Activated CD4-positive, alpha-beta T cell treated with anti-CD3 and anti-CD28 coated beads for 36 hours (primary cell): ENCODE measurements at regions of chr20 and their contacts with region 1.

Region 1: GRCh38 chr20:53578492-53579222 is 15.0 kb downstream of the ZNF217 start:
- DNase-seq: peak; percentile 62
- ATAC-seq: peak; percentile 45
- H3K4me3 Mint-ChIP-seq: peak overlapping the region; percentile 70
- H3K27ac Mint-ChIP-seq: peak overlapping the region; percentile 83
- H3K4me1 Mint-ChIP-seq: peaks cover 91% of the 10 kb centered on the region
- H3K27me3 Mint-ChIP-seq: no peaks in the 10 kb centered on the region

Region 2: GRCh38 chr20:53594068-53595017 is 15.7 kb after region 1 on chr20:
- CTCF ChIA-PET with region 1: interaction called, 5 read pairs
- POLR2A ChIA-PET with region 1: interaction called, 3 read pairs
- intact Hi-C with region 1: loop called in 1 of 2 experiments (anchors 1 kb)
- DNase-seq: peak; percentile 99
- ATAC-seq: peak; percentile 62
- H3K4me3 Mint-ChIP-seq: peak overlapping the region; percentile 97
- H3K27ac Mint-ChIP-seq: peak overlapping the region; percentile 95
- H3K4me1 Mint-ChIP-seq: peaks cover 47% of the 10 kb centered on the region
- H3K27me3 Mint-ChIP-seq: no peaks in the 10 kb centered on the region

Region 3: GRCh38 chr20:53643031-53643832 is 64.6 kb after region 1 on chr20:
- CTCF ChIA-PET with region 1: interaction called, 4 read pairs
- POLR2A ChIA-PET with region 1: no interaction called
- intact Hi-C with region 1: loop called (anchors 1 kb)
- DNase-seq: peak; percentile 80
- ATAC-seq: peak; percentile 98
- H3K4me3 Mint-ChIP-seq: peak overlapping the region; percentile 54
- H3K27ac Mint-ChIP-seq: peak overlapping the region; percentile 97
- H3K4me1 Mint-ChIP-seq: peaks cover 33% of the 10 kb centered on the region
- H3K27me3 Mint-ChIP-seq: no peaks in the 10 kb centered on the region

Region 4: DNA sequence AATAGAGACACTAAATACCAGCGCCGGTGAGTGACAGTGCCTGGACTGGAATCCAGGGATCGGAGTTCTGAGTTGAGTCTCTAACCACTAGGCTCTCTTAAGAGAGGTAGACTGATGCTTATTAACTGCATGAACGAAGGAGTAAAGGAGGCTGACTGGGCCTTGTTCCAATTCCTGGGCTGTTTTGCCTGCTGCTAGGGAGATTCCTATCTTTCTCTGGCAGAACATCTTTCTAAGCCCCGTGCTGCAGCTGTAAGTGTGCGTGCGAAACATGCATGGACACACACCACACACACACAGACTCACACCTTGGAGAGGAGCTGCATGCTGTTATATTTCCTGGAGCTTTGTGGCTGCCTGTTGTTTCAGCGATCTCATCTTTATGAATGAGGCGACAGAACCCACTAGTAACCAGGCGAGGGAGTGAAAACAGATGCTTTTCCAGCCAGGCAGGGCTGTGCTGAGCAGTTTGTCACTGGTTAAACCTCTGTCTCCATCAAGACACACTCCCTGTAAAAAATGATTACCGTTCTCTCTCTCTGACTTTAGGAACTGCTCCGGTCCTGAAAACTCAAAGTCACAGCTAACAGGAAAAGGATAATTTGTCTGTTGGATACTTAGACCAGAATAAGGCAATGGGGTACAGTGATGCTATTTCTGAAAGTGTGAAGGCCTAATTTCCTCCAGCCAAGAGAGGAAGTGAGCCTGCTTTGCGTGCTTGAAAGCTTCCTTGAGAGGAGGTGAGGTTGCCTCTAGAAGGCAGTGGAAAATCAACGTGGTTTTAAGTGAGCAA is 172.4 kb after region 1 on chr20:
- CTCF ChIA-PET with region 1: interaction called, 4 read pairs
- POLR2A ChIA-PET with region 1: no interaction called
- intact Hi-C with region 1: loop called (anchors 5 kb)
- DNase-seq: peak; percentile 60
- ATAC-seq: peak; percentile 70
- H3K4me3 Mint-ChIP-seq: peak overlapping the region; percentile 22
- H3K27ac Mint-ChIP-seq: peak overlapping the region; percentile 96
- H3K4me1 Mint-ChIP-seq: peaks cover 73% of the 10 kb centered on the region
- H3K27me3 Mint-ChIP-seq: no peaks in the 10 kb centered on the region

Region 5: DNA sequence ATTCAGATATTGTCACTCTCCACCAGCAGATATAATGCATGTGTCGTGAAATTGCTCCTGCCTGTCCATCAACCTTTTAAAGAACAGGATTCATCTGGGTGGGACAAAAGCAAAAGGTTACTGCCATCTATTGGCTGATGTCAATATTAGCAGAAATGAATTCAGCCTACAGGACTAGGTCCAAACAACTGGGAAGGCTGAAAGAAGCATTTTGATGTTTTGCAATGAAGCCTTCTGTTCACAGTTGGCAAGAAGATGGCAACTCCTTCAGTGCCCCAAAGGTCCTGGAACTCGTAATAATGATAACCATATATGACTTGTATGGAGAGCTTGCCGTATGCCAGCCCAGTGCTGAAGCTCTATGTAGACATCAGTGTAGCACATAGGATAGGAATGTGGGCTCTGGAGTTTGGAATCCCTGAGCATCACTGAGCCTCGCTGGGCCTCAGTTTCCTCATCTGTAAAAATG is 484.2 kb after region 1 on chr20:
- CTCF ChIA-PET with region 1: interaction called, 3 read pairs
- POLR2A ChIA-PET with region 1: no interaction called
- intact Hi-C with region 1: loop called (anchors 2 to 10 kb)
- DNase-seq: no peak
- ATAC-seq: peak; percentile 54
- H3K4me3 Mint-ChIP-seq: no peak overlapping the region
- H3K27ac Mint-ChIP-seq: no peak overlapping the region
- H3K4me1 Mint-ChIP-seq: peaks cover 15% of the 10 kb centered on the region
- H3K27me3 Mint-ChIP-seq: no peaks in the 10 kb centered on the region